CD4-positive, alpha-beta memory T cell (primary cell): ENCODE measurements at regions of chr5 and their contacts with region 1.

Region 1: DNA sequence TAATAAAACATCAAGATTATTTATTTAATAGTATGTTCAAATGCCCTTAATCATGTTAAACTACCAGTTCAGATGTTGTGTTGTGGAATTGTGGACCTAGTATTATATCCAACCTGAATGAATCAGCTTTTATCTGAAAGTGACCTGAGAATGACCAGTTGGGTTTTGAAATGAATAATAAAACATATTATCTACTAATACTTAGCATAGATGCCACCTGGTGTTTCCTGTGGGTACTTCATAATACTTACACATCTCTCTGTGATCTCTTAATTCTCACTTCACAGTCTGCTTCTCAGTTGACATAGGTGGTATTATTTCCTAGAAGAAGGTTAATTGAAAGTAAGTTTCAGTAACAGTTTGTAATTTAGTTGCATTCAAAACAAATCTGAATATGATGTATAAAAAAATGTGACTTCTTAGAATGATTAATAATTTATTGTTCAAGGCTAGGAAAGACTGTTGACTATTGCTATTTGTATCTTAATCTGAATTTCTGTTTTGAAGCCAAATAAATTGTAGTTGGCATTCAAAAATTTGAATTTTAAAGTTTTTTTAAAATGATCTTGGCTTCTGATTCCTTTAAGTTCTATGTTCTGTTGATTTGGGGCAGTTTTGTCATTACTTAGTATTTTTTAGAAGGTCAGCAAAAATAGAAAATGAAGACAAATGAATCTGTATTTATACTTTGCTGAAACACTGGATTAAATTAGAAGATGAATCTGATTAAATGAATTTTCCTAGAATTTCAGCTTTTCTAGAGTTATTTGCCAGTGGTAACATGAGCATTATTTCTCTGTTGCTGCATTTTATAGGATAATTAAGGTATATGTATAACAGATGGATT is 48.2 kb downstream of the KIF2A start:
- DNase-seq: peak in 4 of 5 donors; percentile 46 to 52 (median 50)
- H3K4me3 ChIP-seq: no peak overlapping the region
- H3K4me3 Mint-ChIP-seq: no peak overlapping the region
- H3K27ac ChIP-seq: no peak overlapping the region
- H3K27ac Mint-ChIP-seq: peak overlapping the region in 5 of 7 donors; percentile 26 to 73 (median 38)
- H3K4me1 ChIP-seq: peaks cover 7% of the 10 kb centered on the region
- H3K4me1 Mint-ChIP-seq: peaks cover 2 to 5% (median 4%) of the 10 kb centered on the region in 4 donors
- H3K27me3 ChIP-seq: no peaks in the 10 kb centered on the region
- H3K27me3 Mint-ChIP-seq: no peaks in the 10 kb centered on the region

Region 2: DNA sequence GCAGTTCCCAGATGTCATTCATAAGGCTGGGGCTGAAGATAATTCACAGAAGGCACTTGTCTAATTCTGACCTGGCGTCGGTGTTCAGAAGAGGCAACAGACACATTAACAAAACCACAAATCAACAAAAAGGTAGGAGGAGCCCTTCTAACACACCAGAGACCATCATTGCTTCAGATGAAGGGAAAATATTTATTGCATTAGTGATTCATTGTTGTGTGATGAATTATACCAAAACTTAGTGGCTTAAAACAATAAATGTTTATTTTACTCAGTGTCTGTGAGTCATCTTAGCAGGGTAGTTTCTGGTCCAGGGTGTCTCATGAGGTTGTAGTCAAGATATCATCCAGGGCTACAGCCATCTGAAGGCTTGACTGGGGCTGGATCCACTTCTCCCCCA is 139.6 kb before region 1 on chr5:
- CTCF ChIA-PET with region 1: no interaction called
- POLR2A ChIA-PET with region 1: no interaction called
- intact Hi-C with region 1: no loop called
- DNase-seq: no peak
- H3K4me3 ChIP-seq: no peak overlapping the region
- H3K4me3 Mint-ChIP-seq: no peak overlapping the region
- H3K27ac ChIP-seq: no peak overlapping the region
- H3K27ac Mint-ChIP-seq: no peak overlapping the region
- H3K4me1 ChIP-seq: no peaks in the 10 kb centered on the region
- H3K4me1 Mint-ChIP-seq: no peaks in the 10 kb centered on the region
- H3K27me3 ChIP-seq: no peaks in the 10 kb centered on the region
- H3K27me3 Mint-ChIP-seq: peaks cover 17 to 19% of the 10 kb centered on the region in 2 donors

Region 3: GRCh38 chr5:62340392-62340791 is 13.9 kb before region 1 on chr5:
- CTCF ChIA-PET with region 1: interaction called, 45 read pairs
- POLR2A ChIA-PET with region 1: no interaction called
- intact Hi-C with region 1: no loop called
- DNase-seq: peak in 4 of 5 donors; percentile 18 to 39 (median 30)
- H3K4me3 ChIP-seq: no peak overlapping the region
- H3K4me3 Mint-ChIP-seq: peak overlapping the region in 1 of 8 donors; percentile 1
- H3K27ac ChIP-seq: no peak overlapping the region
- H3K27ac Mint-ChIP-seq: peak overlapping the region in 6 of 7 donors; percentile 7 to 44 (median 24)
- H3K4me1 ChIP-seq: peaks cover 47% of the 10 kb centered on the region
- H3K4me1 Mint-ChIP-seq: peaks cover 43 to 79% (median 59%) of the 10 kb centered on the region in 4 donors
- H3K27me3 ChIP-seq: no peaks in the 10 kb centered on the region
- H3K27me3 Mint-ChIP-seq: no peaks in the 10 kb centered on the region

Region 4: DNA sequence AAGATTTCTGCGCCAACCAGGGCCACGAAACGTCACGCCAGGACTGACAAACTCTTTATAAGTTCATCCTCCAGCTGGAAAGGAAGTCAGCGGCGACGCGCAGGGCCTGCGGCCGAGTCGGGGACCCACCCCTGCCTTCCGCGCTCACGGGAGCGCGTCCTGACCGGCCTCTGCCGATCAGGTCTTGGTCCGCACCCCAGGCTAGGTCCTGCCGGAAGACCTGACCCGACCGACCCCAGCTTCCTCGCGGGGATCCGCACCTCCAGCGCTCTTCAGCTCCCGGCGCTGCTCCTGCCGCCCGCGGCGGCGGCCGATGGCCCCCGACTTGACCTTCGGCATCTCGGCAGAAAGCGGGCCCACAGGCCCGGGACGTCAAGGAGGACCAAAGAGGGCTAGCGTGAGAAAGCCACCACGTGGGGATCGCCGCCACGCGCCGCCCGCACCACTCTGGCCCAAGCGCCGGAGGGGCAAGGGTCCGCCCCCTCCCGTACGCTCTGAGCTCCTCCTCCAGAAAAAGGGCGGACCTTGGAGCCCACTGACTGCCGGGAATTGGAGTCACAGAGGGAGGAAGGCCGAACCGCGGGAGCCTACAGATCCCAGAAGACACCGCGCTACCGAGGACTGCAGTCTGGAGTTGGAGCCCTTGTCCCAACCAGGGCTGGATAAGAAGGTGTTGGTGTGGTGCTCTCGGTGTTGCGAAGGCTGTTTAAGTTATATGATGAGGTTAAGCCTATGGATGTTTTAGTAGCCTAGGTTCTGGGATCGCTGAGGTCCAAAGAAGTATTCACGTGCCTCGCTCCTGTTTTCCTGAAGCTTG is 49.4 kb after region 1 on chr5 and contains the start of gene DIMT1:
- CTCF ChIA-PET with region 1: interaction called, 10 read pairs
- POLR2A ChIA-PET with region 1: interaction called, 4 read pairs
- intact Hi-C with region 1: no loop called
- DNase-seq: peak; percentile 91 to 95 (median 91)
- H3K4me3 ChIP-seq: peak within 1 kb of the TSS; percentile 82 to 99
- H3K4me3 Mint-ChIP-seq: peak within 1 kb of the TSS; percentile 98 to 100 (median 99)
- H3K27ac ChIP-seq: peak within 1 kb of the TSS; percentile 94
- H3K27ac Mint-ChIP-seq: peak within 1 kb of the TSS; percentile 91 to 99 (median 97)
- H3K4me1 ChIP-seq: peaks cover 16% of the 10 kb centered on the region
- H3K4me1 Mint-ChIP-seq: peaks cover 19 to 32% (median 26%) of the 10 kb centered on the region in 4 donors
- H3K27me3 ChIP-seq: no peaks in the 10 kb centered on the region
- H3K27me3 Mint-ChIP-seq: no peaks in the 10 kb centered on the region
- total RNA-seq, gene DIMT1: 27.9 to 28.4 TPM